GM23248 (cell line): ENCODE measurements at regions of chr6 and their contacts with region 1.

Region 1: GRCh38 chr6:17156112-17156921 is 54.5 kb downstream of the STMND1 start:
- DNase-seq: peak; percentile 78
- H3K4me3 ChIP-seq: no peak overlapping the region
- H3K27ac ChIP-seq: no peak overlapping the region
- H3K4me1 ChIP-seq: no peaks in the 10 kb centered on the region
- H3K27me3 ChIP-seq: peaks cover 14% of the 10 kb centered on the region

Region 2: GRCh38 chr6:17584241-17584803 is 428.0 kb after region 1 on chr6:
- in situ Hi-C with region 1: loop called (anchors 5 kb)
- DNase-seq: peak; percentile 89
- H3K4me3 ChIP-seq: peak overlapping the region; percentile 52
- H3K27ac ChIP-seq: peak overlapping the region; percentile 72
- H3K4me1 ChIP-seq: peaks cover 12% of the 10 kb centered on the region
- H3K27me3 ChIP-seq: no peaks in the 10 kb centered on the region

Region 3: DNA sequence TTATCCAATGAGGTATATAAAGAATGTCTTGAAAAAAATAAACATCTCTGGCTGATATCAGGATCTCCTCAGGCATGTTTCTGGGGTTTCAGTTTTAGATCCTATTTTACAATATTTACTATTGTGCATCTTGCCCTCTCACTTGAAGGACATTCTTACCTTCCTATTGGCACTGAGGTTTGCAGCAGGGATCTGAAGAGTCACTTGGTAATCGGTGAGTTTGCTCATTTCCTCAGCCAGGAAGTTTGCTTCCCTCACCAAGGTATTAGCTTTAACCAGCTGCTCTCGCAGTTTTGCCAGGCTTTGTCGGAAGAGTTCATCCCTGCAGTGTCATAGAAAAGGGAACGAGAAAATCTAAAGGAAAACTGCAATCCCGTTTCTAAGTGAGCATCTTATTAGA is 652.3 kb after region 1 on chr6:
- in situ Hi-C with region 1: loop called (anchors 10 kb)
- DNase-seq: no peak
- H3K4me3 ChIP-seq: no peak overlapping the region
- H3K27ac ChIP-seq: no peak overlapping the region
- H3K4me1 ChIP-seq: no peaks in the 10 kb centered on the region; the same call in 1 of the 2 replicates
- H3K27me3 ChIP-seq: no peaks in the 10 kb centered on the region